ENCODE measurements at regions of chr2 and their contacts with region 1.

Region 1: DNA sequence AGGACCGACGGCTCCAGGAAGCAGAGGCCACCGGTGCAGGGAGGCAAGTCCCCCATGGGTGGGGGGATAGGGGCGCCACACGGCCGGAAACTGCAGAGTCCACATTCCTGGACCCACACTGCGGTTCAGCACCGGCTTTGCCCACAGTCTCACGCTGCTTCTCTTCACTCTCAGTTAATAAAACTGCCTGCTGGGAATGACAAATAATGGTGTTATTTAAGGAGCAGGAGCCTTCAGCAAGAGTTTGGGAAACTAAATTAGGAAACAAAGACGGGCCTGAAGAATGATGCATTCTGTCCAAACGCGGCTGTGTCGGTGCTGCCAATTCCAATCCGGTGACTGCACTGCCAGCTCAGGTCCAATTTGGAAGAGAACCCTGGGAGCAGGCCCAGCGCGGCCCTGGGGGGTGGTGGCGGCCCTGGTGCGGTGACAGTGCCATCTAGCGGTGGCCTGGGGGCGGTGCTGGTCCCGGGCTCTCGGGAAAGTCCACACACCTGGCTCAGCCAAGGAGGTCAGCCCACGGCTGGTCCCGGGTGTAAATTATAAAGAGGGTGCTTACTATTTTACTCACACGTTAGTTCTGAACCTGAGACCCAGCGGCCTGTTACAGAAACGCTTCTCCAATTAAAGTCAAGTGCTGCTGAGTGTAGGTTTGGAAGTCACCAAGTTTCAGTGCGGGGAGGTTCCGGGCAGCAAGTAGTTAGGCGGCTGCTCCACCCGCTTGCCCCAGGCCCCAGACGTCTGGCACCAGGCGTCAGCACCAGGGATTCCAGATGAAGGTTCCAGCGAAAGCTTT is 73.1 kb upstream of the PXDN start:
- DNase-seq: peak; percentile 95
- H3K4me3 ChIP-seq: peak overlapping the region; percentile 25; the same call in 1 of the 2 replicates
- CTCF ChIP-seq: peak; percentile 99

Region 2: DNA sequence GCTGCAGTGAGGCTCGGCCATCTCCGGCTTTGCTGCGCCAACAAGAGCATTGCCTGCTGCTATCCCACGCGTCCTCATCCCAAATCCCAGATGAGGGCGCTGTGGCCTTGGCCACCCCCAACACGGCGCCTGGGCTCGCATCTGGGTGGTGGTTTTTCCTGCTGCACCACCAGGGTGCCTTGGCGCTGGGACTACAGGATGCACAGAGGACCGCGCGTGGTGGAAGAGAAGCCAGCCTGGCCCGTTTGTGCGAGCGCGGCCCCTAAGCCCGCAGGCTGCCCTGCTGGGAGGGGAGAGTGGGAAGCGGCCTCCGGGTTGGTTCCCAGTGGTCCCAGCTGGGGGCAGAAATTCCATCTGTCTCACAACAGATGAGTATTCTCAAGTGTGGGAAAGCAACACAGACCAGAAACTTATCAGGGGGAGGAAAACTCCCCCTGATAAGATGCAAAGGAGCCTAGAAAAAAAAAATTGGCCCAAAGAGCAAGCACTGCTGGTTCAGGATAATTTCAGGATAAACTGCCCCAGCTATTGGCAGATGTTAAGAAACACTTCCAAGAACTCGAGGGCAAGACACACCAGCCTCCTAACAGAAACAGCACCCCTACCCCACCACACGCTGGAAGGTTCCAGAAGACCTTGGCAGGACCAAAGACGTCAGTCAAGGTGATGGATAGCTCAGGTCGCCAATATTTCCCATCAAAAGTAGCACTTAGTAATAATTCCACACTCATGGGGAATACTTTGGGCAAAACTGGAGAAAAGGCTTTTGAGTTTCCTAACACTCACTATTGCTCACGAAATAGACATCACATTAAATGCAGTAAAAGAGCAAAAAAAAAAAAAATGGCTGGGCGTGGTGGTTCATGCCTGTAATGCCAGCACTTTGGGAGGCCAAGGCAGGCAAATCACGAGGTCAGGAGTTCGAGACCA is 225.2 kb before region 1 on chr2:
- CTCF ChIA-PET with region 1: interaction called, 14 read pairs
- POLR2A ChIA-PET with region 1: no interaction called
- DNase-seq: no peak
- H3K4me3 ChIP-seq: no peak overlapping the region
- CTCF ChIP-seq: peak; percentile 71

Region 3: DNA sequence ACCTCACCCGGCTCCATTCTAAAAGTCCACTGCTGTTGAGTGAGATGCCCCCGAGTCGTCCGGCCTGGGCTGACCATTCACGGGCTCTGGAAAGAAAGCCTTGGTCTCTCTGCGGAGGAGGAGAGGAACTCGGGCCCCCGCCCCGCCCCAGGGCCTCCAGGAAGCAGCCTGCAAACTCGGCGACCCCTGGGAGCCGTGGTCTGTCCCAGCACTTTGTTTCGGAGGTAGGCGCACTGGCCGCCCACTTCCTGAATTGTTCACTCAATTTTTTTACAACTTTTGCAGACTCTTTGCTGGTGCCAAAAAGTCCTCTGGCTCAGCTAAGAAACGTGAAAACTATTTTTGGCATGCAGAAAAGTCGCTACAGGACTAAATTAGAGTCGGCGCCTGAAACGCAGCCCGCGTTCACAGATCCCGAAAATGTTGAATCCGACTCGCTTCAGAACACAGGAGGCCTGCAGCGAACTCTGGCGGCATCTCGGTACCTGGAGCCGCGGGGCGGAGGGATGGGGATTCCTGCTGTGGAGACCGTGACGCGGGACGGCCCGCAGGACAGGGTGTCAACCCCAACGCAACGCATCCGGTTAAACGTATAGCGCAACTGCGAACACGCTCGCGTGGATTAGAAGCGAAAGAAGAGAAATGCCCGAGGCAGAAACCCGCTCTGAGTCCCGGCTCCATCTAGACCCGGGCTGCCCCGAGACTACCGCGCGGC is 74.6 kb before region 1 on chr2:
- CTCF ChIA-PET with region 1: interaction called, 11 read pairs
- POLR2A ChIA-PET with region 1: interaction called, 8 read pairs
- DNase-seq: no peak
- H3K4me3 ChIP-seq: peak overlapping the region; percentile 75
- CTCF ChIP-seq: peak; percentile 71

Region 4: DNA sequence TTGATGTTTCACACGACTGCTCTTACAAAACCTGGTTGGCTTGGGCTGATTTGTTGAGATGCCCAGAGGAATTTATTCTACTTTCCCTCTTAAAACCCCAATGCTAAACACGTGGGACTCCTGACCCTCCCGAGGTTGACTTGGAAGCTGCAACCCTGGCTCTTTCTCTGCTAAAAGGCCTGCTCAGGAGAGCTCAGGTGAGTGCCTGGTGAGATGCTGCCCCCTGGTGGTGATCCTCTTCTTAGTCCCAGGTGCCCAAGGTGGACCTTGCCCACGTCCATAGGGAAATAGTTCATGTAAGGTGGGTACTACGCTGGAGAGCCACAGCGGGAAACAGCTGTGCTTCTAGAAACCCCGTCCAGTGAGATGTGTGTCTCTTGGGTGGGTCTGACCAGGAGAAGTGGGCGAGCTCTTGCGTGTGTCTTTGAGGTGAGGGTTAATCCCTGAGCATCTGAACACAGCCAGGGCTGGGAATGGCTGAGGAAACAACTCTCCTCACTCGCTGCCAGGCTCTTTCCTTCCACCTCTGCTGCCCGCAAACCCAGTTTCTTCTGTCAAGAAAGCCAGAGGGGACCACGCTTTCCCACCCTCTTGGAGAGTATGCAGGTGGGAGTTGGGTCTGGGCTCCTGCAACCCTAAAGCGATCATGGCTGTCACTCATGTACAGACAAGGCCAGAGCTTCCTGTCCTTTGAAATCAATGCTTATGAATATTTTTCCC is 47.6 kb before region 1 on chr2:
- CTCF ChIA-PET with region 1: interaction called, 12 read pairs
- POLR2A ChIA-PET with region 1: no interaction called
- DNase-seq: no peak
- H3K4me3 ChIP-seq: no peak overlapping the region
- CTCF ChIP-seq: peak; percentile 77

Region 5: GRCh38 chr2:1791685-1792435 is 25.6 kb before region 1 on chr2:
- CTCF ChIA-PET with region 1: interaction called, 17 read pairs
- POLR2A ChIA-PET with region 1: interaction called, 3 read pairs
- DNase-seq: peak; percentile 94
- H3K4me3 ChIP-seq: no peak overlapping the region
- CTCF ChIP-seq: no peak

Region 6: GRCh38 chr2:1830936-1831619 is 13.6 kb after region 1 on chr2:
- CTCF ChIA-PET with region 1: interaction called, 27 read pairs
- POLR2A ChIA-PET with region 1: no interaction called
- DNase-seq: peak; percentile 26
- H3K4me3 ChIP-seq: no peak overlapping the region
- CTCF ChIP-seq: no peak

Region 7: DNA sequence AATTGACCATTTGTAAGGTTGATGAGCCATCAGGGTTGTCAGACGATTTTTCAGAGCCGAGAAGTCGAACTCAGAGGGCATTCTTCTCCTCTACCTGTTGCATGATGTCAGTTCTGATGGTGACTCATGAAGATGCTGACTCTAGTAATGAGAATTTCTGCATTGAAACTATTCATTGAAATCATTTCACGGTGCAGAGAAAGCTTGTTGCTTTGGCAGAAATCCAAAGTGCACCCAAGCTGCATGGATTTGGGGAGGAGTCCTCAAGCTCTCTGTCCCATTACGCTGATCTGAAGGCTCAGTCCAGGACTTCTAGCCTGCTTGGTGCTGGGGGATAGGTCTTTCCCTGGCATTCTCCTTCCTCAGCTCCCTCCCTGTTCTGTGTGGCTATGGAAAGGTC is 52.5 kb after region 1 on chr2:
- CTCF ChIA-PET with region 1: no interaction called
- POLR2A ChIA-PET with region 1: no interaction called
- DNase-seq: no peak
- H3K4me3 ChIP-seq: no peak overlapping the region
- CTCF ChIP-seq: no peak

Region 8: DNA sequence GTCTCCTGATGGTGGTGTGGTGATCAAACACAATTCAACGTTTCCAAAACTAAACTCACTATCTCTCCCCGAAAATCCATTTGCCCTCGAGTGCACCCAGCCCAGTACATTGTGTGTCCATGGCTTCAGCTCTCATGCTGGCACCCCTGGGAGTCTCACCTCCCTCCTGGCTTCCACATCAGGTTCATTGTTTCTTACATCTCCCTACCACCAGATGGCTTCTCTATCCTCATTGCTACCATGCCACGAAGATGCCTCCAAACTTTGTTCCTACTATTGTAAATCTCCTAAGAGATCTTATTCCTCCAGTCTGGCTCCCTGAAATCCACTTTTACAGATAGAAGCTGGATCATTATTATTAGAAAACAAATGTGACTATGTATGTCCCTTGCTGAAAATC is 316.6 kb after region 1 on chr2:
- CTCF ChIA-PET with region 1: no interaction called
- POLR2A ChIA-PET with region 1: no interaction called
- DNase-seq: no peak
- H3K4me3 ChIP-seq: no peak overlapping the region
- CTCF ChIP-seq: no peak

Measured in AG04449 (cell line).